ENCODE measurements at regions of chr12 and their contacts with region 1.

Region 1: GRCh38 chr12:57583008-57583831 is 7.8 kb upstream of the PIP4K2C start:
- DNase-seq: peak; percentile 61

Region 2: GRCh38 chr12:57487597-57488401 is 95.4 kb before region 1 on chr12 and contains the start of gene MARS1:
- intact Hi-C with region 1: no loop called
- DNase-seq: peak; percentile 98
- total RNA-seq, gene MARS1: 135 to 142 TPM

Region 3: DNA sequence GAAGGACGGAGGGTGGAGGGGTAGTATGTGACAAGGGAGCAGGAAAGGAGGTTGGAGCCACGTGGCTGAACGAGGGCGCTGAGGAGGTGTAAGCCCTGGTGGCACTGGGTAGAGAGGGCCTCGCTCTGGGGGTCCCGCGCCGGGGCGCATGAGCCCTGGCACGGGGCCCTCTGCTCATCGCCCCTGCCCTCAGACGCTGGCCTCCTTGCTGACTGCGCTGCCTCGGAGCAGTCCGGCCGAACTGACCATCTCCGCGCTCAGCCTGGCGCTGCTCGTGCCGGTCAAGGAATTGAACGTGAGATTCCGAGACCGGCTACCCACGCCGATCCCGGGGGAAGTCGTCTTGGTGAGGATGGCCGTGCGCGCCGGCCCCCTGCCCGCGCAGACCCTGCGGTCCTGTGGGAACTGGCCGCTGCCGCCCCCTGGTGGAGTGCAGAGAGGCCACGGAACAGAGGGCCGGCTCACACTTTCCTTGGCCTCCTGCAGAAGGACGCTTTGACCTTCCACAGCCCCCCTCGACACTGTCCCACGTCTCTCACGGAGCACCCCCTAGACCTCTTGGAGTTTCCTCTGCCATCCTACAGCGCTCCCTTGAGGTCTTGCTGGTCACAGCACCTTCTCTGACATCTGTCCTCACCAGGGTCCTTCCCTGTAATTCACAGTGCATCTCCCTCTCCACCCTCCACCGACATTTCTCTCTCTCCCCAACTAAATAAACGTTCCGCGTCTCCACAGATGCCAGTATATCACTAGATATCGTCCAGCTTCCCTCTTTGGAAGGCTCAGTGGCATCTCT is 38.5 kb after region 1 on chr12:
- intact Hi-C with region 1: loop called (anchors 2 to 5 kb)
- DNase-seq: no peak

Region 4: GRCh38 chr12:57632694-57633477 is 49.7 kb after region 1 on chr12 and contains the start of gene B4GALNT1:
- intact Hi-C with region 1: loop called in 1 of 2 experiments (anchors 5 kb)
- DNase-seq: no peak
- total RNA-seq, gene B4GALNT1: 4.3 to 6.0 TPM